GM13976 (cell line): ENCODE measurements at regions of chr5 and their contacts with region 1.

Region 1: GRCh38 chr5:141557681-141558136 is 61.1 kb downstream of the DIAPH1 start:
- DNase-seq: peak; percentile 49
- CTCF ChIP-seq: peak; percentile 52

Region 2: DNA sequence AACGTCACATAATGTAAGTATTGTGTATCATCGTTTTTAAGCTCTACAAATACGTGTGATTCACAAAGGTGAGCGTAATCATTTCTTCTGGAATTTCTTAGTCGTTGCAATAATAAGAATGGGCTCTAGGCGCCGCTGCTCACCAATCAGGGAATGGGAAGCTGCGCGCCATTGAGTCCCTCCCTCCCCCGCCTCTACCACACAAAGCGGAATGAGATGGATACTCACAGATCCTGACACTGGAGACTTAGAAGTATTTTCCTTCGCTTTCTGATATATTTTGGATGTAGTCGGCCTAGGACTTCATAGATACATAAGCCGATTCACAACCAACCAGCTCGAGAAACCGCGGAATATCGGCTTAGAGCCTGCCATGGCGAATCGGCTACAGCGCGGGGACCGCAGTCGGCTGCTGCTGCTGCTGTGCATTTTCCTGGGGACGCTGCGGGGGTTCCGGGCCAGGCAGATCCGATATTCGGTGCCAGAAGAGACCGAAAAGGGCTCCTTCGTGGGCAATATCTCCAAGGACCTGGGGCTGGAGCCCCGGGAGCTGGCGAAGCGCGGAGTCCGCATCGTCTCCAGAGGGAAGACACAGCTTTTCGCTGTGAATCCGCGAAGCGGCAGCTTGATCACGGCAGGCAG is 136.7 kb before region 1 on chr5 and contains the start of gene PCDHGA11:
- in situ Hi-C with region 1: loop called (anchors 5 kb)
- DNase-seq: peak; percentile 76
- CTCF ChIP-seq: peak; percentile 71